ENCODE measurements at regions of chr14 and their contacts with region 1.

Region 1: DNA sequence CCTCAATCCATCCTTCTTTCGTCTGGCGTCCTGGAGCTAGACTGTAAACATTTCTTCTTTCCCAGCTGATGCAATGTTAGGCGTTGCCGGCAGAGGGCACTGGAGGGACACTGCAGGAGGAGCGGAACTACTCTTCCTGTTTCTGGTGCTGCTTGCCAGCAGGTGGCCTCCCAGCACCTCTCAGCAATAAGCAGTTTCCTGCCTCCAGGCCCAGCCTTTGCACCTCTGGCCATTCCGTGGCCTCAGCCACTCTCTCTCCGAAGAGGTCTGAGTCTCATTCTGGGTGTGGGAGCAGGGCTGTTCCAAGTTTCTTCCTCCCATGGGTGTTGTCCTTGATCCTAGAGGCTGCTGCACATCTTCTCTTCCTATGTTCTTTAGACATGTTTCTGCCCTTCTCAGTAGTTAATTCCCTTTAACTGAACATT is 7.5 kb upstream of the ASPG start:
- DNase-seq: peak; percentile 77 to 92 (median 82)
- ATAC-seq: peak; percentile 99
- H3K4me3 ChIP-seq: no peak overlapping the region
- H3K4me3 Mint-ChIP-seq: peak overlapping the region; percentile 54
- H3K27ac ChIP-seq: peak overlapping the region in 1 of 2 donors; percentile 9
- H3K27ac Mint-ChIP-seq: no peak overlapping the region
- H3K4me1 ChIP-seq: peaks cover 19% of the 10 kb centered on the region
- H3K4me1 Mint-ChIP-seq: peaks cover 20% of the 10 kb centered on the region
- H3K27me3 ChIP-seq: no peaks in the 10 kb centered on the region
- H3K27me3 Mint-ChIP-seq: peaks cover 8% of the 10 kb centered on the region
- CTCF ChIP-seq: peak; percentile 100

Region 2: DNA sequence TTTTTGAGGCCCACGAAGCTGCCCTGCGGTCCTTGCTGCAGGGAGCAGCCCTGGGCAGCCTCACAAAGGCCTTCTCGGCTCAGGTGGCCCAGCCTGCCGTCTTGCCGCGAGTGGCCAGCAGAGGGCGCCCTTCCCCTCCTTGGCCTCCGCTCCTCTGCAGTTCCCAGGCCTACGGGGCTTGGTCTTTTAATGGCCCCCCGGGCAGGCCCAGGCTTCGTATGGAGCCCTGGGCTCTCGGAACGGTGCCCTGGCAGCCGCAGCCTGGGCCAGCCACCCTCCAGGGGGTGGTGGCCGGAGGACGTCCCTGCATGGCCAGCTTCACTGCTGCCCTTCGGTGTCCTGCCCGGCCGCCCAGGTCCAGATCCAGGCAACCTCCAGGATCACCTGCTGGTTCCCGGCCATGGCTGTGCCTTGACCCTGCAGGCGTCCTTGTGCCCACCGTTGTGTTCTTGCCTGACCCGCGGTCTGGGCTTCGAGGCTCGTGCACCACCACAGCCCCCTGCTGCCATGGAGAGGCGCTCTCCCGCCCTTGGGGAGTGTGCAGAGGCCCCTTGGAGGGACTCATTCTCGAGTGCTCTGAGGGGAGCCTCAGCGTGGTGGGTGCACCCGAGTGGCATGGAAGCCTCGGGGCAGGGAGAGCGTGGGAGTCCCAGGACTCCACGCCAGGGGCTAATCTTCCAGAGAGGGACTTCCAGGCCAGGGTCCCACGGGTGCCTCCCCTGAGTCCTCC is 16.8 kb after region 1 on chr14:
- CTCF ChIA-PET with region 1: interaction called, 13 read pairs
- POLR2A ChIA-PET with region 1: no interaction called
- intact Hi-C with region 1: no loop called
- DNase-seq: peak; percentile 50 to 83 (median 68)
- ATAC-seq: peak; percentile 77
- H3K4me3 ChIP-seq: no peak overlapping the region
- H3K4me3 Mint-ChIP-seq: no peak overlapping the region
- H3K27ac ChIP-seq: no peak overlapping the region
- H3K27ac Mint-ChIP-seq: no peak overlapping the region
- H3K4me1 ChIP-seq: peaks cover 11% of the 10 kb centered on the region
- H3K4me1 Mint-ChIP-seq: peaks cover 5% of the 10 kb centered on the region
- H3K27me3 ChIP-seq: no peaks in the 10 kb centered on the region
- H3K27me3 Mint-ChIP-seq: peaks cover 4% of the 10 kb centered on the region
- CTCF ChIP-seq: peak; percentile 81

Region 3: DNA sequence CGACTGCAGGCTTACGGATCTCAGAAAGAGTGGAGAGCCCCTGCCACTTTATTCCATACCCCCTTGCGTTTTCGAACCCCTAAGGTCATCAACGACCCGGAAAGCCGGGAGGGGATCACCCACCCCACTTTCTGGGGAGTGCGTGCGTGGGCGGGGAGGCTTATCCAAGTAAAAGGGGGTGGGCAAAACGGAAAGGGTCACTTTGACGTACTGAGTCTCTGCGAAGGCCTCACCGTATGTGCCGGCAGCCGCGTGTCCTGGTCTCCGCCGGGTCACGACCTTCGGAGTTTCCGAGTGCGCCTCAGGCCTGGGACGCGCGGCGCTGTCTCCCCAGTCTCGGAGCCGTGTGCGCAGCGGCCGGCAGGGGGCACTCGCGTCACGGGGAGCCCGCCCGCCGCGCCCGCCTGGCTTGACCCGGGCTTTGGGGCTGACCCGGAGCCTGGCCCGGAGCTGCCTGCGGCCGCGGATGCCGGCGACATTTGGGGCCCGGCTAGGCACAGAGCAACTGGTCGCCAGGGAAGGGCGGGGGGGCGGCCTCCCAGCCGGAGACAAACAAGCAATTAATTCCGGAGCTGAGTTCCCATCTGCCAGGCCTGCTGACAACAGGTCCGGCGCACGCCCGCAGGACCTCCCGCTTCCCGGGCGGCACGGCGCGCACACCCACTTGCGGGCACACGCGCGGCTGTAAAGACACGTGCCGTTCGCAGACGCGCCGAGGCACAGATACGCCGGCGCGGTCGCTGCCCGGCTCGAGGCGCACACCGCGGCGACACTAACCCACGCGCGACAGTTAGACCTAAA is 59.5 kb after region 1 on chr14:
- CTCF ChIA-PET with region 1: interaction called, 5 read pairs
- POLR2A ChIA-PET with region 1: no interaction called
- intact Hi-C with region 1: loop called in 1 of 2 experiments (anchors 5 kb)
- DNase-seq: peak; percentile 15 to 75 (median 55)
- ATAC-seq: peak; percentile 67
- H3K4me3 ChIP-seq: peak overlapping the region; percentile 29
- H3K4me3 Mint-ChIP-seq: peak overlapping the region; percentile 63
- H3K27ac ChIP-seq: no peak overlapping the region
- H3K27ac Mint-ChIP-seq: no peak overlapping the region
- H3K4me1 ChIP-seq: peaks cover 26% of the 10 kb centered on the region
- H3K4me1 Mint-ChIP-seq: peaks cover 4% of the 10 kb centered on the region
- H3K27me3 ChIP-seq: peaks cover 50 to 61% of the 10 kb centered on the region in 2 experiments
- H3K27me3 Mint-ChIP-seq: peaks cover 43% of the 10 kb centered on the region
- CTCF ChIP-seq: peak; percentile 83

Region 4: DNA sequence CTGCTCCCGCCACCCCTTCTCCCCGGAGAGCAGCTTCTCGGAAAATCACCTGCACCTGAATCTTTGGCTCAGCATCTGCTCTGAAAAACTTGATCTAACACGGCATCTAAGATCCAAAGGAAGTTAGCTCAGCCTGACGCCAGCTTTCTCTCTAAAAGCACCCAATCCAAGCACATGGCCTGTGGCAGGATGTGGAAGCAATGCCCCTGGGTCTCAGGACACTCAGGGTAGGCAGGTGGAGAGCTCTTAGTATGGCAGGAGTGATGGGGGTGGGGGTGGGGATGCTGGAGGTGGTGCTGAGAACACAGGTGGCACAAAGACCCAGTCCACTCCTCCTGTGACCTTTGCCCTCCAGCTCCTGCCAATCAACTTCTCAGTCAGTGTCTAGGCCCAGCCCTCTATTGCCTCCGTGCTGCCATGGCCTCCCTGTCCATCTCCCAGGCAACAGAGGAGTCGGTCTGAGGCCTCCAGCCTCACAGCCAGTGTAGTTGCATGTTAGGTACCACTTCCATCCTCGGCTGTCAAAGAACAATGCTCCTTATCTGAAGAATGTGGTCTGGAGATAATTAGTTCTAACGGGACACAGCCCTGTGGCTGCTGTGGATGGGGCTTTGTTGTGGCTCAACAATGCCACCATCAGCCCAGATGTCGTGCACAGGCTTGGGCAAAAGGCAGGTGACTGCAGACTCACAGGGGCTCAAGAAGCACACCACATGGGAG is 321.5 kb after region 1 on chr14:
- CTCF ChIA-PET with region 1: no interaction called
- POLR2A ChIA-PET with region 1: no interaction called
- intact Hi-C with region 1: loop called in 1 of 2 experiments (anchors 5 kb)
- DNase-seq: peak in 6 of 14 experiments; percentile 33 to 74 (median 58)
- ATAC-seq: peak; percentile 82
- H3K4me3 ChIP-seq: no peak overlapping the region
- H3K4me3 Mint-ChIP-seq: no peak overlapping the region
- H3K27ac ChIP-seq: no peak overlapping the region
- H3K27ac Mint-ChIP-seq: peak overlapping the region; percentile 52
- H3K4me1 ChIP-seq: peaks cover 37% of the 10 kb centered on the region
- H3K4me1 Mint-ChIP-seq: peaks cover 44% of the 10 kb centered on the region
- H3K27me3 ChIP-seq: no peaks in the 10 kb centered on the region
- H3K27me3 Mint-ChIP-seq: no peaks in the 10 kb centered on the region
- CTCF ChIP-seq: peak; percentile 30

Region 5: GRCh38 chr14:104563742-104564615 is 485.9 kb after region 1 on chr14:
- CTCF ChIA-PET with region 1: interaction called, 19 read pairs
- POLR2A ChIA-PET with region 1: interaction called, 3 read pairs
- intact Hi-C with region 1: loop called (anchors 1 kb)
- DNase-seq: peak; percentile 57 to 80 (median 66)
- ATAC-seq: peak; percentile 82
- H3K4me3 ChIP-seq: no peak overlapping the region
- H3K4me3 Mint-ChIP-seq: no peak overlapping the region
- H3K27ac ChIP-seq: no peak overlapping the region
- H3K27ac Mint-ChIP-seq: no peak overlapping the region
- H3K4me1 ChIP-seq: peaks cover 7% of the 10 kb centered on the region
- H3K4me1 Mint-ChIP-seq: no peaks in the 10 kb centered on the region
- H3K27me3 ChIP-seq: peaks cover 5 to 19% of the 10 kb centered on the region in 2 experiments
- H3K27me3 Mint-ChIP-seq: peaks cover 16% of the 10 kb centered on the region
- CTCF ChIP-seq: peak; percentile 74

Region 6: GRCh38 chr14:104639889-104640548 is 562.0 kb after region 1 on chr14:
- CTCF ChIA-PET with region 1: no interaction called
- POLR2A ChIA-PET with region 1: no interaction called
- intact Hi-C with region 1: loop called (anchors 1 to 2 kb)
- DNase-seq: peak in 12 of 14 experiments; percentile 18 to 68 (median 38)
- ATAC-seq: peak; percentile 73
- H3K4me3 ChIP-seq: no peak overlapping the region
- H3K4me3 Mint-ChIP-seq: no peak overlapping the region
- H3K27ac ChIP-seq: no peak overlapping the region
- H3K27ac Mint-ChIP-seq: no peak overlapping the region
- H3K4me1 ChIP-seq: peaks cover 6% of the 10 kb centered on the region
- H3K4me1 Mint-ChIP-seq: peaks cover 4% of the 10 kb centered on the region
- H3K27me3 ChIP-seq: peaks cover 6 to 13% of the 10 kb centered on the region in 2 experiments
- H3K27me3 Mint-ChIP-seq: peaks cover 15% of the 10 kb centered on the region
- CTCF ChIP-seq: peak; percentile 66

Region 7: GRCh38 chr14:105267820-105268548 is 1189.9 kb after region 1 on chr14:
- CTCF ChIA-PET with region 1: no interaction called
- POLR2A ChIA-PET with region 1: no interaction called
- intact Hi-C with region 1: loop called in 1 of 2 experiments (anchors 10 kb)
- DNase-seq: no peak
- ATAC-seq: no peak
- H3K4me3 ChIP-seq: no peak overlapping the region
- H3K4me3 Mint-ChIP-seq: no peak overlapping the region
- H3K27ac ChIP-seq: no peak overlapping the region
- H3K27ac Mint-ChIP-seq: no peak overlapping the region
- H3K4me1 ChIP-seq: no peaks in the 10 kb centered on the region
- H3K4me1 Mint-ChIP-seq: no peaks in the 10 kb centered on the region
- H3K27me3 ChIP-seq: no peaks in the 10 kb centered on the region
- H3K27me3 Mint-ChIP-seq: no peaks in the 10 kb centered on the region
- CTCF ChIP-seq: no peak

Measured in CD4-positive, alpha-beta T cell (primary cell).